Naive thymus-derived CD4-positive, alpha-beta T cell (primary cell): ENCODE measurements at regions of chr6 and their contacts with region 1.

Region 1: GRCh38 chr6:30793521-30794194 is 49.3 kb upstream of the IER3 start:
- DNase-seq: peak in 7 of 9 donors; percentile 22 to 69 (median 57)
- ATAC-seq: peak; percentile 94
- H3K4me3 ChIP-seq: peak overlapping the region; percentile 12
- H3K4me3 Mint-ChIP-seq: peak overlapping the region; percentile 64 to 85 (median 78)
- H3K27ac ChIP-seq: peak overlapping the region; percentile 71
- H3K27ac Mint-ChIP-seq: peak overlapping the region; percentile 90 to 99 (median 96)
- H3K4me1 ChIP-seq: peaks cover 16 to 27% of the 10 kb centered on the region in 2 donors
- H3K4me1 Mint-ChIP-seq: peaks cover 29 to 72% (median 58%) of the 10 kb centered on the region in 7 donors
- H3K27me3 ChIP-seq: no peaks in the 10 kb centered on the region
- H3K27me3 Mint-ChIP-seq: no peaks in the 10 kb centered on the region

Region 2: DNA sequence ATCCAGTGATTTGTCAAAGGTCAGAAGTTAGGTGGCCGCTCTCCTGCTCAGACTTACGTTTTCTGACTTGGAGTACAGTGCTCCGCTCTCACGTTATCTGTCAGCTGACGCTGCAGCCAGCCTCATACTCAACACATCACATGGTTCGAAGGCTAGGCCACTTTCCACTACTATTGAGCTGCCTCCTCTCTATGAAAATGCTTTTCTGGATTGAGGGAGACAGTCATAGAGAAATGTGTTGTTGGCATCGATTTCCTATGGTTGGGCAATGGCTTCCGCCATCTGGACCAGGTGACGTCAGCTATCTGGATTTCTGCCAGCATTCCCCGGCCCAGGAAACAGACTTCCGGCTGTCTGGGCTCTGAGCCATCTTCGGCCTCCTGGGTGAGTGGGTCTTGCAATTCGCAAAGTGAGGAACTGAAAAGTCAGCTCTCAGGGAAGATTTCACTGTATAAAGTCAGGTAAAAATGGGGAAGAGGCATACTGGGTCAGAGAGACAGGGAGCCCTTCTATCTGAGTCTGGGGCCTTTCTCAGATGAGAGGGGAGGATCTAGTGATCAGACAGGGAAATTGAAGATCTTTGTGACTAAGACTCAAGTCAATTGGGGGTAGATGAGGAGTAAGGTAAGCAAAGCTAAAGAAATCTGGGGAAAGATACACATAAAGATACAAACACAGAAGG is 11.8 kb before region 1 on chr6:
- CTCF ChIA-PET with region 1: interaction called, 4 read pairs
- POLR2A ChIA-PET with region 1: interaction called, 15 read pairs
- intact Hi-C with region 1: no loop called
- DNase-seq: peak in 2 of 9 donors; percentile 11 to 41
- ATAC-seq: peak; percentile 79
- H3K4me3 ChIP-seq: no peak overlapping the region
- H3K4me3 Mint-ChIP-seq: peak overlapping the region; percentile 28 to 79 (median 53)
- H3K27ac ChIP-seq: peak overlapping the region; percentile 26
- H3K27ac Mint-ChIP-seq: peak overlapping the region; percentile 23 to 83 (median 62)
- H3K4me1 ChIP-seq: peaks cover 0 to 24% of the 10 kb centered on the region in 2 donors
- H3K4me1 Mint-ChIP-seq: peaks cover 36 to 73% (median 70%) of the 10 kb centered on the region in 7 donors
- H3K27me3 ChIP-seq: no peaks in the 10 kb centered on the region
- H3K27me3 Mint-ChIP-seq: peaks cover 0 to 4% (median 0%) of the 10 kb centered on the region in 5 donors

Region 3: DNA sequence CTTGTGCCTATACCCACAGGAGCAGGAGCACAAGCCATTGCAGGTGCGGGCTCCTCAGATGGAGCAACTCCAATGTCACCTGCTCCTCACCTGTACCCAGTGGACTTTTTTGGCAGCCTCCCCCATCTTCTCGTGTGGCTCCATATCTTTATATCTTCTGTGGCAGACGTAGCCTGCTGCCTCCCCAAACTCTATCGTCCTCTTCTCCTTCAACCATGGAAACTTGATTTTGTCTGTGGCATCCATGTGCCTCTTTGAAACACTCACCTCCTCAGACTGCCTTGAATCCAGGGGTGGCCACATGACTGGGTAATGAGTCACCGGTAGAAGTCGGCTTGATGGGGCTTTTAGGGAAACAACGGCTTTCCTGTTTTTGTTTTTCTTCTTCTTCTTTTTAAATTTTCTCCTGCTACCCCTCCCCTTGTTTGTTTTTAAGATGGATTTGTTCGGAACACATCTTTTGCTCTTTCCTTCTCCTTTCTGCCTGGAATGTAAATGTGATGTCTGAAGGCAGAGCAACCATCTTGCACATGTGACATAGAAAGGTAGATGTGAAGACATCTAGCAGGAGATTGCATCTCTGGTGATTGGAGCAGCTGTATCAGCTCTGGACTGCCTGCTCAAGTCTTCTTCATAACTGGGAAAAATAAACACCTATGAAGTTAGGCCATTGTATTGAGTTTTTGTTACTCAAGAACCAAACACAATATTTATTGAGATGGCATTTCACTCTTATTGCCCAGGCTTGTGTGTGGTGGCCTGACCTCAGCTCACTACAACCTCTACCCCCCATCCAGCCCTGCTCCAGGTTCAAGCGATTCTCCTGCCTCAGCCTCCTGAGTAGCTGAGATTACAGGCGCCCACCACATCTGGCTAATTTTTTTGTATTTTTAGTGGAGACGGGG is 20.7 kb after region 1 on chr6:
- CTCF ChIA-PET with region 1: interaction called, 3 read pairs
- POLR2A ChIA-PET with region 1: interaction called, 31 read pairs
- intact Hi-C with region 1: loop called (anchors 2 kb)
- DNase-seq: peak in 2 of 9 donors; percentile 38 to 63
- ATAC-seq: peak; percentile 80
- H3K4me3 ChIP-seq: no peak overlapping the region
- H3K4me3 Mint-ChIP-seq: peak overlapping the region in 9 of 10 donors; percentile 12 to 70 (median 39)
- H3K27ac ChIP-seq: no peak overlapping the region
- H3K27ac Mint-ChIP-seq: peak overlapping the region; percentile 49 to 95 (median 83)
- H3K4me1 ChIP-seq: peaks cover 18 to 40% of the 10 kb centered on the region in 2 donors
- H3K4me1 Mint-ChIP-seq: peaks cover 39 to 85% (median 78%) of the 10 kb centered on the region in 7 donors
- H3K27me3 ChIP-seq: no peaks in the 10 kb centered on the region
- H3K27me3 Mint-ChIP-seq: no peaks in the 10 kb centered on the region